Heart left ventricle (tissue), 16 donors: ENCODE measurements at regions of chr5 and their contacts with region 1.

Region 1: DNA sequence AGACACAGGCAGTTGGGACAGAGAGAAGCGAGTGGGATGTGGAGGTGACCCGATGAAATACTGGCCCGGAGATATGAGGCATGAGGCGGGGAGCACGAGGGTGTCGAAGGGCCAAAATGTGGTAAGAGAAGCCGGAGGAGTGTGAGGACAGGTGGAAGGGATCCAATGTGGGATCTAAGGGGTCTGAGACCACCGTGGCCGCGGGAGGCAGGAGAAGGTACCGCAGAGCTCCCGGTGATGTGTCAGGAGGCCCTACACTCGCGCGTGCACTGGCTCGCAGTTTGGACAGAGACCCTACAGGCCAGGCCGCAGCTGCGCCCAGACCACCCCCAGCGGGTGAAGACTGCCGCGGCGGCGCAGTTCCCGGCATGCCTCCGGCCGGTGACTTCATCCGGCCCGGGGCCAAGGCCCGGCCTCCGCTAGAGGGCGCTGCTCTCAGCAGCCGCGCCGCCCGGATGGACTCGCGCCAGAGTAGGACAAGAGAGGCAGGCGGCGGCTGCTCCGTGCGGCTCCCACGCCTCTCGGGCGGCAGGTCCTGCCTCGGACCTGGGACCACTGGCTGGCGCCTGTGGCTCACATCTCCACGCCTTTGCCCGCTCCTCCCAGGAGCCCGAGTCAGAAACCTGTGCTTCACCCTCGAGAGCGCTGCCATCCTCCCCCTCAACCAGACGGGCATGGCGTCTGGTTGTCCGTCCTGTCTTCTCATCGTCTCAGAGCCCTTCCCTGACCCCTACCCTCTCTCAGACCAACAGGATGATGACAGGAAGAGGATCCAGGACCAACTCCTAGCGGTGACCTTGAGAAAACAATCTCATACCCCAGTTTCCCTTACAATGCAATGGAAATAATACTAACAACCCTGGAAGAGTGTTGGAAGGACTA is 35.4 kb upstream of the STING1 start:
- DNase-seq: peak; percentile 92 to 97 (median 93)
- ATAC-seq: peak; percentile 77 to 94 (median 94)
- H3K4me3 ChIP-seq: peak overlapping the region; percentile 8 to 73 (median 56)
- H3K27ac ChIP-seq: peak overlapping the region; percentile 76 to 92 (median 86)
- H3K4me1 ChIP-seq: peaks cover 0 to 27% (median 10%) of the 10 kb centered on the region in 12 donors
- H3K27me3 ChIP-seq: no peaks in the 10 kb centered on the region
- CTCF ChIP-seq: peak; percentile 97 to 100 (median 98)
- POLR2A ChIP-seq: peak in 1 of 2 donors; percentile 61

Region 2: GRCh38 chr5:139422307-139422893 is 95.5 kb before region 1 on chr5:
- intact Hi-C with region 1: loop called (anchors 1 to 2 kb)
- DNase-seq: no peak
- ATAC-seq: peak in 2 of 4 donors; percentile 29 to 40
- H3K4me3 ChIP-seq: no peak overlapping the region
- H3K27ac ChIP-seq: no peak overlapping the region
- H3K4me1 ChIP-seq: peaks cover 6 to 39% (median 27%) of the 10 kb centered on the region in 12 donors
- H3K27me3 ChIP-seq: no peaks in the 10 kb centered on the region
- CTCF ChIP-seq: peak; percentile 67 to 94 (median 82)
- POLR2A ChIP-seq: no peak

Region 3: DNA sequence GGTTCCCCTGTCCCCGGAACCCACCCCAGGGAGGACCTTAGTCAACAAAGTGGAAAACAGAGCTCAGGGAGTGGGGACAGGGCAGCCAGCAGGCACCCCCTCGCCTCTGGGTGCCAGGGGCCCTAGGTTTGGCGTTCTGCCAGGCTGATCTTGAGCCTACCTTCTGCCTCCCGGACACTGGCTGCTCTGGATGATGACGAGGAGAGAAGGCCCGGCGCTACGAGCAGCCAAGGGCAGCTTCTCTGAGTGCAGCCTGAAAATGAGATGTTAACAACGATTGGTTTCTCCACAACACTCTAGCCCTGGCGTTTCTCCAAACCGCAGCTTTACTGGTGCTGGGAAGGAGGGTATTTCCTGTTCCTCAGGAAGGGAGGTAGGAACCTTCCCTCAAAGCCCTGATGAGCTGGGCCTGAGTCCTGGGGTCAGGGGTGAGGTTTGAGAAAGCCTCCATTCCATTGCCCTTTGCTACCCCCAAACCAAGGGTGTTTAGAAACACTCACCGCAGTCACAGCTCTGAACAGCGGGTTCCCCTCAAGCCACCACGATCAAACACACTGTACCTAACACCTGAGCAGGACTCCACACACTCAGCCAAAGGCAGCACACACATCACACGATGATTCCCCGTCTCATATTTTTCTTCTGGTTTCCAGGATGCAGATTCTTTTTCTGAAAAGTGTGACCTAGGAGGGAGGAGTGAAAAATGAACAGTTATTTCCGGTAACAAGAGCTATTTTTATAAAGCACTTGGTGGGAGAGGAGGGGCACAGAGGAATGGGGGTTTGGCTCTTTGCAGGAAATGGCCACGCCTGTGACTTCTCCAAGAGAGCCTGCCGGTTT is 35.7 kb before region 1 on chr5 and contains the start of gene STING1:
- intact Hi-C with region 1: loop called in 2 of 10 experiments (anchors 2 to 5 kb)
- DNase-seq: peak; percentile 84 to 92 (median 86)
- ATAC-seq: peak; percentile 52 to 77 (median 72)
- H3K4me3 ChIP-seq: peak within 1 kb of the TSS; percentile 35 to 81 (median 62)
- H3K27ac ChIP-seq: peak within 1 kb of the TSS; percentile 86 to 98 (median 92)
- H3K4me1 ChIP-seq: peaks cover 0 to 77% (median 43%) of the 10 kb centered on the region in 12 donors
- H3K27me3 ChIP-seq: no peaks in the 10 kb centered on the region
- CTCF ChIP-seq: no peak
- POLR2A ChIP-seq: peak in 1 of 2 donors; percentile 25
- total RNA-seq, gene STING1: 32.4 to 119 (median 57.9) TPM

Region 4: DNA sequence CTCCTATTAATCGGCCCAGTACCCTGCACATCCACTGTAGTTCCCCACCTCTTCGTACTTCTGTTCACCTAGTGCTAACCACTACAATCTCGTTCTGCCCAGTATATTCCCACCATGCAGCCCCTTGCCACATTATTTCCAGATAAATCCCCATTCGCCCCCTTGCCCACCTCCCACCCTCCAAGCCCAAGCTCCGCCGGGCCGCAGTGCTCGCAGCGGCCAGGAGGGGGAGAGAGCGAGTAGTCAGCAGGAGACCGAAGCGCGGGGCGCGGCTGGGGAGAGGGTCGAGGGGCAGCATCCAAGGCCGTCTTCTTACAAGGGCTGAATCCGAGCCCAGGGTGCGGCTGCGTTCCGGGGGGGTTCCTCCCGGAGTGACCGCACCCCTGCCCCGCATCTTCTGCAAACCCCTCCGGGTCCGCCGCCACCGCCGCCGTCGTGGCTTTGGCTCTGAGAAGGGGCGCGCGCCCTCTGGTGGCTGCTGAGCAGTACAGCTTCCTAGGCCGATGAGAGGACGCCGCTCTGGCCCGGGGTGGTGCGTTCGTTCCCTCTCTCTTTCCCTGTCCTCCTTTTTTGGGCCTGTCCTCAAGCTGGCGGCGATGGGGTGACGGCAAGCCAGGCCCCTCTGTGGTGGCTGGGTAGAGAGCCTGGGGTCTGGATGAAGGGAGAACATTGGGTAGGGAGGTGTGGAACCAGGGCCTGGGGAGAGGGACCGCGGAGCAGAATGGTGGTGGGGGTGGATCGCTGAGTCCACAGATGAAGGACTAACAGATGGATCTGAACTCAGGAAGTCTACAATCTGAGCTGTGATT is 247.7 kb after region 1 on chr5:
- intact Hi-C with region 1: loop called in 1 of 10 experiments (anchors 5 kb)
- DNase-seq: peak; percentile 81 to 90 (median 82)
- ATAC-seq: peak; percentile 81 to 89 (median 85)
- H3K4me3 ChIP-seq: peak overlapping the region; percentile 32 to 74 (median 57)
- H3K27ac ChIP-seq: peak overlapping the region in 3 of 12 donors; percentile 24 to 52 (median 35)
- H3K4me1 ChIP-seq: peaks cover 0 to 33% (median 12%) of the 10 kb centered on the region in 12 donors
- H3K27me3 ChIP-seq: peaks cover 0 to 26% (median 19%) of the 10 kb centered on the region in 9 donors
- CTCF ChIP-seq: peak in 11 of 12 donors; percentile 93 to 100 (median 99)
- POLR2A ChIP-seq: peak in 1 of 2 donors; percentile 32